GM12878 (cell line): ENCODE measurements at regions of chr4 and their contacts with region 1.

Region 1: DNA sequence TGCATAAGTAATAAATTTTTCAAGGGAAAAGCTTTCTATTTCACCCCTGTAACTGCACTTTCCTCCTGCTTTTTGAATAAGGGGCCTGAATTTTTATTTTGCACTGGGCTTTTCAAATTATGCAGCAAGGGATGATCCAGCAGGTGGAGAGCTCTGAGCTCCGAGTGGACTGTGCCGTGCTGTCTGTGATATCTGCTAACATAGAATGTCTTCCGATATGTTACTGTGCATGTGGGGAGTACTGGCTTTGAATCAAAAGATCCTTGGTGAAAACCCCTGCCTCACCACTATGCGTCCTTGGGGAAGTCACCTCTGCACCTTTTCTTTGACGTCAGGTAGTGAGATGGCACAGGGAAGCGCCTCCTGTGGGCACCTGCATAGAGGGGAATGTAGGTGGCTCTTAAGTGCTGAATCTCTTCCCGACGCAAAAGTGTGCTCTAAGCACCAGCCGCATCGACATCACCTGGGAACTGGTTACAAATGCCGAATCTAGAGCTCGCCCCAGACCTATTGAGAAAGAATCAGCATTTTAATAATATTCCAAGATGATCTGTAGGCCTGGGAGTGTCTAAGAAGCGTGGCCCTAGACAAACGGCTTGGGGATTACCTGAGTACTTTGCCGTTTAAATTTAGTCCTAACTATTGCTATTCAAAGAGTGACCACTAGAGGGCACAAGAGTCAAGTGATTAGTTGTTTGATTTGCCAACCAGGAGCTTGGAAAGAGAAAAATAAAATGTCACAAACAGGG is 19.2 kb upstream of the WFS1 start:
- DNase-seq: peak; percentile 42
- ATAC-seq: peak; percentile 85
- H3K4me3 ChIP-seq: no peak overlapping the region
- H3K27ac ChIP-seq: no peak overlapping the region
- H3K4me1 ChIP-seq: no peaks in the 10 kb centered on the region
- H3K27me3 ChIP-seq: peaks cover 0 to 3% of the 10 kb centered on the region in 2 experiments; a peak in 2 of 4 replicates
- CTCF ChIP-seq: peak; percentile 70 to 81 (median 80); a peak in 5 of 6 replicates
- EP300 ChIP-seq: no peak
- POLR2A ChIP-seq: no peak
- RAD21 ChIP-seq: peak; percentile 91

Region 2: GRCh38 chr4:5812506-5813229 is 437.7 kb before region 1 on chr4:
- CTCF ChIA-PET with region 1: no interaction called
- POLR2A ChIA-PET with region 1: no interaction called
- RAD21 ChIA-PET with region 1: no interaction called
- SMC1A ChIA-PET with region 1: no interaction called
- in situ Hi-C with region 1: no loop called
- intact Hi-C with region 1: no loop called
- DNase-seq: no peak
- ATAC-seq: peak; percentile 92
- H3K4me3 ChIP-seq: no peak overlapping the region
- H3K27ac ChIP-seq: no peak overlapping the region
- H3K4me1 ChIP-seq: no peaks in the 10 kb centered on the region
- H3K27me3 ChIP-seq: no peaks in the 10 kb centered on the region
- CTCF ChIP-seq: peak; percentile 55 to 74 (median 69); a peak in 5 of 6 replicates
- EP300 ChIP-seq: no peak
- POLR2A ChIP-seq: no peak
- RAD21 ChIP-seq: peak; percentile 91

Region 3: DNA sequence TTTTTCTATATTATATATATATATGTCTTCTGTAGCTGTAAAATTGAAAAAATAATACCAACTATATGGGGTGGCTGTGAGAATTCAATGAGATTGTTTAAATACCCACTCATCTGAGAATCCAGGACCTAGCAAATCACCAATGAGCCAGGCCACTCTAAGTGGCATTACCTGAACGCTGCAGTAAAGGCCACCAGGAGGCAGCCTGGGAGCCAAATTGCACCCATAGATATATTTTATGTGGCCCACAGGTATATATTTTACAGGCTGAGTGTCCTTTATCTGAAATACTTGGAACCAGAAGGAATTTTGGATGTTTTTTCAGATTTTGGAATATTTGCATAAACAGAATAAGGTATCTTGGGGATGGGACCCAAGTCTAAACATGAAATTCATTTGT is 174.0 kb before region 1 on chr4:
- CTCF ChIA-PET with region 1: interaction called, 12 read pairs
- POLR2A ChIA-PET with region 1: no interaction called
- RAD21 ChIA-PET with region 1: interaction called, 3 read pairs
- SMC1A ChIA-PET with region 1: interaction called, 4 read pairs
- in situ Hi-C with region 1: no loop called
- intact Hi-C with region 1: no loop called
- DNase-seq: no peak
- ATAC-seq: peak; percentile 73
- H3K4me3 ChIP-seq: no peak overlapping the region
- H3K27ac ChIP-seq: no peak overlapping the region
- H3K4me1 ChIP-seq: no peaks in the 10 kb centered on the region
- H3K27me3 ChIP-seq: no peaks in the 10 kb centered on the region
- CTCF ChIP-seq: peak; percentile 40 to 51 (median 41)
- EP300 ChIP-seq: no peak
- POLR2A ChIP-seq: no peak
- RAD21 ChIP-seq: peak; percentile 67

Region 4: GRCh38 chr4:6180841-6181631 is 69.4 kb before region 1 on chr4:
- CTCF ChIA-PET with region 1: interaction called, 13 read pairs
- POLR2A ChIA-PET with region 1: no interaction called
- RAD21 ChIA-PET with region 1: interaction called, 16 read pairs
- SMC1A ChIA-PET with region 1: interaction called, 15 read pairs
- in situ Hi-C with region 1: no loop called
- intact Hi-C with region 1: loop called (anchors 2 kb)
- DNase-seq: peak; percentile 98
- ATAC-seq: peak; percentile 88
- H3K4me3 ChIP-seq: no peak overlapping the region
- H3K27ac ChIP-seq: peak overlapping the region; percentile 94
- H3K4me1 ChIP-seq: peaks cover 67% of the 10 kb centered on the region
- H3K27me3 ChIP-seq: no peaks in the 10 kb centered on the region
- CTCF ChIP-seq: no peak
- EP300 ChIP-seq: peak; percentile 100
- POLR2A ChIP-seq: peak; percentile 81
- RAD21 ChIP-seq: peak; percentile 18; the same call in 1 of the 2 replicates

Region 5: DNA sequence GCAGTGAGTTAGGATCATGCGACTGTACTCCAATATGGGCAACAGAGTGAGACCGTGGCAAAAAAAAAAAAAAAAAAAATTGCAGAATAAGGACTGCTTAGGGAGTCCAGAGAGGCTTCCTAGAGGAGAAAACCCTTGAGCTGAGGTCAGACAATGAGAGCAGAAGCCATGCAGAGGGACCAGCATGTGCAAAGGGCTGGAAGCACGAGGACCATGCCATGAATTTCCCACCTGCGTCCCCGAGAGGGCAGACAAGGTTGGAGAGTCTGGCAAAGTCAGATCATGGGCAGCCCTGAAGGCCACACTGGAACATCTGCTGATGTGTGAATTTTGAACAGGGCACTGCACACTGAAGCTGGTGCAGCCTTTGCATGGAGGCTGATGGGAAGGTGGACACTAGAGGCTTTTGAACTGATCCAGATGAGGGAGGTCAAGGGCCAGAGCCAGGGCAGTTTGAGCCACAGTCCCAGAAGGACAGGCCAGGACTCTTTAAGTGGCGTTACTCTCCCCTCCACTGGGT is 43.6 kb before region 1 on chr4:
- CTCF ChIA-PET with region 1: interaction called, 34 read pairs
- POLR2A ChIA-PET with region 1: no interaction called
- RAD21 ChIA-PET with region 1: interaction called, 7 read pairs
- SMC1A ChIA-PET with region 1: interaction called, 9 read pairs
- in situ Hi-C with region 1: no loop called
- intact Hi-C with region 1: no loop called
- DNase-seq: no peak
- ATAC-seq: no peak
- H3K4me3 ChIP-seq: no peak overlapping the region
- H3K27ac ChIP-seq: no peak overlapping the region
- H3K4me1 ChIP-seq: peaks cover 8% of the 10 kb centered on the region; the same call in 1 of the 2 replicates
- H3K27me3 ChIP-seq: no peaks in the 10 kb centered on the region; a peak in 1 of 4 replicates
- CTCF ChIP-seq: no peak
- EP300 ChIP-seq: no peak
- POLR2A ChIP-seq: no peak
- RAD21 ChIP-seq: no peak

Region 6: DNA sequence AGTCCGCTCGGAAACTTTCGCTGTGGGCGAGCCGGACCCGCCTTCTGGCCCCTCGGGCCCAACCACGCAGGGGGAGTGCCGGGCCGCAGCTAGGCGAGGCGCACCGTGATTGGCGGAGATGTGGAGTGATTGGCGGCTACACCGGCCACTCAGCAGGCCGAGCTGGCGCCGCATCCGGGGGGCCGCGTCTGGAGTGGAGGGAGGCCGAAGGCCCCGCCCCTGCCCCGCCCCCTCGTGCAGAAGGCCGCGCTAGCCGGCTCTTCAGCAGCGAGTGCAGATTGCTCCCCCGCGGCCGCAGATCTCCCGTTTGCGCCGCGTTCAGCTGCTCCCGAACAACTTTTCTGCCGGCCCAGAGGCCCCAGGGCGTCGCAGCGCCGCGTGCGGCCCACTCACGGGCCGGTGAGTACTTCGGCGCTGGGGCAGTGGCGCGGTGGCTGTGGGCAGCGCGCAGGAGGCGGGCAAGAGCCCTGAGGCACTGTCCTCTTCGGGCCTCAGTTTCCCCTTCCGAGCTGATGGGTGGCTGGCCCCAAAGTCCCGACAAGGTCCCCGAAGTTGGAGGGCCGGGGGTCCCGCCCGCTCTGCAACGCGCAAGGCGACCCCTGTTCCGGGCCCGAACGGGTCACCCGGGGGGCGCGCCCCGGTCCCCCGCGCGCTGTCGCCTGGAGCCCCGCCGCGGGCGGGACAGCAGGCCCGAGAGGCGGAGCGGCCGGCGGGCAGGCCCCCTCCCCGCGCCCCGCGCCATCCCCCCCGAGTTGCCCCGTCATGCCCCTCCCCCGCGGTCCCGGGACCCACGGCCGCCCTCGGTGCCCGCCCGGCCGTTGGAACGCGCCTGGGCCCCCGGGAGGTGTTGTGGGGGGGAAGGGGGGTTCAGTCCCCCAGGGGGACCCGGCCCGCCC is 19.5 kb after region 1 on chr4 and contains the start of gene WFS1:
- CTCF ChIA-PET with region 1: interaction called, 172 read pairs
- POLR2A ChIA-PET with region 1: no interaction called
- RAD21 ChIA-PET with region 1: interaction called, 46 read pairs
- SMC1A ChIA-PET with region 1: interaction called, 96 read pairs
- in situ Hi-C with region 1: no loop called
- intact Hi-C with region 1: no loop called
- DNase-seq: peak; percentile 82
- ATAC-seq: peak; percentile 100
- H3K4me3 ChIP-seq: peak within 1 kb of the TSS; percentile 93
- H3K27ac ChIP-seq: no peak within 1 kb of the TSS
- H3K4me1 ChIP-seq: peaks cover 10% of the 10 kb centered on the region
- H3K27me3 ChIP-seq: no peaks in the 10 kb centered on the region; a peak in 1 of 4 replicates
- CTCF ChIP-seq: no peak
- EP300 ChIP-seq: no peak
- POLR2A ChIP-seq: peak; percentile 69
- RAD21 ChIP-seq: no peak
- polyA plus RNA-seq, gene WFS1: 0.31 to 0.37 TPM

Region 7: DNA sequence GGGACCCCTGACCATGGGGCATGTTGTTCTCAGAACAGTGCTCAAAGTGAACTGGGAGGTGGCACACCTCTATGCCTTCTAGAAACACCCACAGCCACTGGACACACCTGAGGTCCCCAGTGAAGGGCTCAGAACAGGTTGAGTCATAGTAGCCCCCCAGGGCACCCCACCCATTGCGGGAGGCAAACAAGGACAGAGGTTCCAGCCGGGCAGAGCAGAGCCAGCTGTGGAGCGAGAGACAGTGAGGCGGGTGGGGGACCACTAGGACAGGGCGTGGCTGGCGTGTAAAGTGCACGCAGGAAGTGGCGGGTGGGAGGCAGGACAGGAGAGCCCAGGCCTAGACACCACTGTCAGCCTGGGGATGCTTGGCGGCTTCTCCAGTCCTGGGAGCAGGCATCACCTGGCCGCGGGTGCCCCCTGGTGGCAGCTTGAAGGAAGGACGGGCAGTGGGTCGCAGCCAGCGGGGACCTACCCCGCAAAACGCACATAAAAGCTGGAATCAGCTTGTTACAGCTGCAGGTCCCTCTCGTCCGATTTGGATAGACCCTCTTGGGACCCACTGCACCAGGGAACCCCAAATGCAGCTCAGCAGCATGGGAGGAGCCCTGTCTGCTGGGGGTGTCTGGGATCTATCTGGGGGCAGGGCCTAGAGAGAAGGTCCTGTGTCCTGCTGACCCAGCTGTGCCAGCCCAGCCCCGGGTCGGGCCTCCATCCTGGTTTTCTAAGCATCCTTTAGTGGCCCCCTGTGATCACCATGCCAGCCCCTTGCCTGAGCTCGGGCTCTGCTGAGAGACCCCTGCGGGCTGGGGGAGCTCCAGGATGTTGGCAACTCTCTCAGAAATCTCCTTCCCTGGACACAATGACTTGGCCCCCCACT is 76.9 kb after region 1 on chr4:
- CTCF ChIA-PET with region 1: interaction called, 469 read pairs
- POLR2A ChIA-PET with region 1: interaction called, 4 read pairs
- RAD21 ChIA-PET with region 1: interaction called, 222 read pairs
- SMC1A ChIA-PET with region 1: interaction called, 137 read pairs
- in situ Hi-C with region 1: loop called (anchors 5 kb)
- intact Hi-C with region 1: loop called (anchors 1 kb)
- DNase-seq: no peak
- ATAC-seq: peak; percentile 81
- H3K4me3 ChIP-seq: no peak overlapping the region
- H3K27ac ChIP-seq: no peak overlapping the region
- H3K4me1 ChIP-seq: no peaks in the 10 kb centered on the region; the same call in 1 of the 2 replicates
- H3K27me3 ChIP-seq: peaks cover 3% of the 10 kb centered on the region in 2 experiments; a peak in 3 of 4 replicates
- CTCF ChIP-seq: peak; percentile 87 to 91 (median 90); a peak in 5 of 6 replicates
- EP300 ChIP-seq: no peak
- POLR2A ChIP-seq: no peak
- RAD21 ChIP-seq: peak; percentile 97

Region 8: DNA sequence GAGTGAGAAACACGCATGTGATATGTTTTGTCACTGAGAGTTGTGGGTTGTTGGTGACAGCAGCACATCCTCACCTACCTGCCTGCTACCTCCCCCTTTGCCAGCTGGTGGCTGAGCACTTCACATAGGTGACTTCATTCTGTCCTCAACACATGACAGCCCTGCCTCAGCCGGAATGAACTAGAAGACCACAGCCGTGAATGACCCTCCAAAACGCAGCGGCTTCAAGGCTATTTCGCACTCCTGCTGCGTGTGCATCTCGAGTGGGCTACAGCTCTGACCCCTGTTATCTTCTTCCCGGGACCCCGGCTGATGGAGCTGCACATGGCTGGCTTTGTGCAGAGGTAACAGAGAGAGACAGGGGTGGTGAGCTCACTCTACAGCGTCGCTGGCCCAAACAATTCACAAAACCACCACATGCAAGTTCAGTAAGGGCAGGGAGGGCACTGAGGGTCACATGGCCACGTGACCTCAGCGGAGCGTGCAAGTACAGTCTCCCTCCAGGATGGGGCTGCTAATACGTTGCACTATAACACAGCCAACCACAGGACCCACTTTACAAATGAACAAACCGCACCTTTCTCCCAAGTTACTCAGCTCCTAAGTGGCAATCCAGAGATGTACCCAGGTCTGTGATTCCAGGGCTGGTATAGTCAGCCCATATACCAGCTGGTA is 228.3 kb after region 1 on chr4:
- CTCF ChIA-PET with region 1: no interaction called
- POLR2A ChIA-PET with region 1: no interaction called
- RAD21 ChIA-PET with region 1: no interaction called
- SMC1A ChIA-PET with region 1: no interaction called
- in situ Hi-C with region 1: no loop called
- intact Hi-C with region 1: no loop called
- DNase-seq: no peak
- ATAC-seq: no peak
- H3K4me3 ChIP-seq: no peak overlapping the region
- H3K27ac ChIP-seq: no peak overlapping the region
- H3K4me1 ChIP-seq: no peaks in the 10 kb centered on the region
- H3K27me3 ChIP-seq: no peaks in the 10 kb centered on the region; a peak in 1 of 4 replicates
- CTCF ChIP-seq: no peak
- EP300 ChIP-seq: no peak
- POLR2A ChIP-seq: no peak
- RAD21 ChIP-seq: no peak